Caco-2 (cell line): ENCODE measurements at regions of chr5 and their contacts with region 1.

Region 1: GRCh38 chr5:151447174-151448037 is at the start of gene SLC36A1:
- DNase-seq: peak; percentile 94
- H3K4me3 ChIP-seq: peak within 1 kb of the TSS; percentile 81
- H3K4me3 Mint-ChIP-seq: peak within 1 kb of the TSS; percentile 94
- H3K27ac Mint-ChIP-seq: peak within 1 kb of the TSS; percentile 88
- H3K4me1 ChIP-seq: peaks cover 8% of the 10 kb centered on the region; the same call in 1 of the 2 replicates
- H3K4me1 Mint-ChIP-seq: peaks cover 27% of the 10 kb centered on the region
- H3K27me3 ChIP-seq: no peaks in the 10 kb centered on the region
- H3K27me3 Mint-ChIP-seq: no peaks in the 10 kb centered on the region
- CTCF ChIP-seq: peak; percentile 87 to 93
- total RNA-seq, gene SLC36A1: 17.5 and 18.2 TPM in 2 replicates

Region 2: DNA sequence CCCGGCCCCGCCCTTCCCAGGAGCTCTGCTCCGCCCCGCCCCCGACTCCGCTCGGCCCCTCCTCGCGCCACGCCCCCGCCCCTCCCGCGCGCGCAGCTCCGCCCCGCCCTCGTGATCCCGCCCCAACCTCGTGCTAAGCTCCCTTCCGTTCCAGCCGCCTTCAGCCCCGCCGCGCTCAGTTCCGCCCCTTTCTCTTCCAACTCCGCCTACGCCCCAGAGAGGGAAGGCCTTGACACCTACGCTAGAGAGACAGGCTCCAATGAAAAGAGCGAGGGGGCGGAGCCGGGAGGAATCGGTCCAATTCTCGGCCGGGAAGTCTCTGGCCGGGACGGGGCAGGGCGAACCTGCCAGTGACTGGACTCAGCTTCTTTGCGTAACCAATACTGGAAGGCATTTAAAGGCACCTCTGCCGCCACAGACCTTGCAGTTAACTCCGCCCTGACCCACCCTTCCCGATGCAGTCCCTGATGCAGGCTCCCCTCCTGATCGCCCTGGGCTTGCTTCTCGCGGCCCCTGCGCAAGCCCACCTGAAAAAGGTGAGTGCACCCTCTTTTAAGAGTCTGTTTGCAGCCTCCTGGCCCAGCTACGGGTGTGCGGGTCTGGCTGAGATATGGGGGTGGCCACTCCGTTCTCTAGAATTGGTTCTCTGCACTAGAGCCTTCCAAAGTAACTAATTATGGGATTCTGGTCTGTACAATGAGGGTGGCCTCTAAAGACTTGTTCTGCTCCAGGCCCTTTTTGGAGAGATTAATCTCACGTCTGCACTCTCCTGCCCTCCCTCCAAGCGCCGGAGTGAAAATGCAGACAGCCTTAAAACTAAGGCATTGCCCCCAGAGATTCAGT is 194.4 kb before region 1 on chr5 and contains the start of gene GM2A:
- CTCF ChIA-PET with region 1: interaction called, 10 read pairs
- POLR2A ChIA-PET with region 1: interaction called, 4 read pairs
- intact Hi-C with region 1: no loop called
- DNase-seq: peak; percentile 99 to 100
- H3K4me3 ChIP-seq: peak within 1 kb of the TSS; percentile 76
- H3K4me3 Mint-ChIP-seq: peak within 1 kb of the TSS; percentile 76
- H3K27ac Mint-ChIP-seq: peak within 1 kb of the TSS; percentile 50
- H3K4me1 ChIP-seq: peaks cover 16% of the 10 kb centered on the region
- H3K4me1 Mint-ChIP-seq: peaks cover 23% of the 10 kb centered on the region
- H3K27me3 ChIP-seq: no peaks in the 10 kb centered on the region
- H3K27me3 Mint-ChIP-seq: no peaks in the 10 kb centered on the region
- CTCF ChIP-seq: no peak
- total RNA-seq, gene GM2A: 27.6 and 28.0 TPM in 2 replicates

Region 3: GRCh38 chr5:151357801-151358200 is 89.6 kb before region 1 on chr5:
- CTCF ChIA-PET with region 1: no interaction called
- POLR2A ChIA-PET with region 1: no interaction called
- intact Hi-C with region 1: no loop called
- DNase-seq: no peak
- H3K4me3 ChIP-seq: no peak overlapping the region
- H3K4me3 Mint-ChIP-seq: no peak overlapping the region
- H3K27ac Mint-ChIP-seq: no peak overlapping the region
- H3K4me1 ChIP-seq: no peaks in the 10 kb centered on the region
- H3K4me1 Mint-ChIP-seq: no peaks in the 10 kb centered on the region
- H3K27me3 ChIP-seq: no peaks in the 10 kb centered on the region
- H3K27me3 Mint-ChIP-seq: peaks cover 2% of the 10 kb centered on the region
- CTCF ChIP-seq: no peak

Region 4: DNA sequence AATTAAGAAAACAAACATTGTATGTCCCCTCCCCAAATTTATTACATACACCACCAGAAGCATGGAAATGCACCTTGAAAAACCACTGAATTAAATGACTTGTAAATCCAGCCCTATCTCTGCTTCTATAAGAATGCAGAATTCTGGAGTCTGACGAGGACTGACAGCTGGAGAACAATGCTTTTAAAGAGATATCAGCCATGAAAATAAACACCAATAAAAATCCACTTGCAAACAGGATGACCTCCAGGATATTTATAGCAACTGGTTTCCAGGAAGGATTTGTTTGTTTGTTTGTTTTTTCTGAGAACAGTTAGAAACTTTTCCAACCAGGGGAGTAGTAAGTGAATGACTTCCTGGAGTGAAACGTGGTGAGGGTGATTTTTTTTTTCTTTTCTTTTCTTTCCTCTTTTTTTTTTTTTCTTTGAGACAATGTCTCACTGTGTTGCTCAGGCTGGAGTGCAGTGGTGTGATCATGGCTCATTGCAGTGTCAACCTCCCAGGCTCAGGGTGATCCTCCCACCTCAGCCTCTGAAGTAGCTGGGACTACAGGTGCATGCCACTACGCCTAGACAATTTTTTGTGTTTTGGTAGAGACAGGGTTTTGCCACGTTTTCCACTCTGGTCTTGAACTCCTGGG is 38.7 kb before region 1 on chr5:
- CTCF ChIA-PET with region 1: no interaction called
- POLR2A ChIA-PET with region 1: no interaction called
- intact Hi-C with region 1: no loop called
- DNase-seq: no peak
- H3K4me3 ChIP-seq: no peak overlapping the region
- H3K4me3 Mint-ChIP-seq: no peak overlapping the region
- H3K27ac Mint-ChIP-seq: no peak overlapping the region
- H3K4me1 ChIP-seq: peaks cover 9% of the 10 kb centered on the region
- H3K4me1 Mint-ChIP-seq: peaks cover 10% of the 10 kb centered on the region
- H3K27me3 ChIP-seq: no peaks in the 10 kb centered on the region
- H3K27me3 Mint-ChIP-seq: no peaks in the 10 kb centered on the region
- CTCF ChIP-seq: no peak

Region 5: DNA sequence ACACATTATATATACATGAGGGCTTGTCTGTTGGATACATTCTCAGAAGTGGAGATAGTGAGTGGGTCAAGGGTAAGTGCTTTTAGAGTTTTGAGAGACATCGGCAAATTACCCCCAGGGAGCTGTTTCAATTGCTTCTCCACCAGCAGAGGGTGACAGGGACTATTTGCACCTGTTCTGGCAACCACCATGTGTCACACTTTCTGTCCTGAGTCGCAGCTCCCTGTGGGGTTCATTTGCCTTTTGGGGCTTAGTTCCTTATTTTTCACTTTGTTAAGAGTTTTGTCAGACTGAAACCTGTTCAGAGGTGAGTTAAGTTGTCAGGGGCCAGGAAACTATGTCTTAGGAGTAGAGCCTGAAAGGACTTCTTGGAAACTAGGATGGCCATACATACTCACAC is 20.1 kb before region 1 on chr5:
- CTCF ChIA-PET with region 1: interaction called, 13 read pairs
- POLR2A ChIA-PET with region 1: no interaction called
- intact Hi-C with region 1: no loop called
- DNase-seq: no peak
- H3K4me3 ChIP-seq: no peak overlapping the region
- H3K4me3 Mint-ChIP-seq: no peak overlapping the region
- H3K27ac Mint-ChIP-seq: peak overlapping the region; percentile 34
- H3K4me1 ChIP-seq: peaks cover 21% of the 10 kb centered on the region
- H3K4me1 Mint-ChIP-seq: peaks cover 20% of the 10 kb centered on the region
- H3K27me3 ChIP-seq: no peaks in the 10 kb centered on the region
- H3K27me3 Mint-ChIP-seq: no peaks in the 10 kb centered on the region
- CTCF ChIP-seq: peak; percentile 27 to 41

Region 6: GRCh38 chr5:151499501-151500035 is 52.2 kb after region 1 on chr5:
- CTCF ChIA-PET with region 1: interaction called, 6 read pairs
- POLR2A ChIA-PET with region 1: no interaction called
- intact Hi-C with region 1: loop called (anchors 1 kb)
- DNase-seq: no peak
- H3K4me3 ChIP-seq: no peak overlapping the region
- H3K4me3 Mint-ChIP-seq: no peak overlapping the region
- H3K27ac Mint-ChIP-seq: no peak overlapping the region
- H3K4me1 ChIP-seq: no peaks in the 10 kb centered on the region
- H3K4me1 Mint-ChIP-seq: no peaks in the 10 kb centered on the region
- H3K27me3 ChIP-seq: no peaks in the 10 kb centered on the region
- H3K27me3 Mint-ChIP-seq: no peaks in the 10 kb centered on the region
- CTCF ChIP-seq: no peak

Region 7: DNA sequence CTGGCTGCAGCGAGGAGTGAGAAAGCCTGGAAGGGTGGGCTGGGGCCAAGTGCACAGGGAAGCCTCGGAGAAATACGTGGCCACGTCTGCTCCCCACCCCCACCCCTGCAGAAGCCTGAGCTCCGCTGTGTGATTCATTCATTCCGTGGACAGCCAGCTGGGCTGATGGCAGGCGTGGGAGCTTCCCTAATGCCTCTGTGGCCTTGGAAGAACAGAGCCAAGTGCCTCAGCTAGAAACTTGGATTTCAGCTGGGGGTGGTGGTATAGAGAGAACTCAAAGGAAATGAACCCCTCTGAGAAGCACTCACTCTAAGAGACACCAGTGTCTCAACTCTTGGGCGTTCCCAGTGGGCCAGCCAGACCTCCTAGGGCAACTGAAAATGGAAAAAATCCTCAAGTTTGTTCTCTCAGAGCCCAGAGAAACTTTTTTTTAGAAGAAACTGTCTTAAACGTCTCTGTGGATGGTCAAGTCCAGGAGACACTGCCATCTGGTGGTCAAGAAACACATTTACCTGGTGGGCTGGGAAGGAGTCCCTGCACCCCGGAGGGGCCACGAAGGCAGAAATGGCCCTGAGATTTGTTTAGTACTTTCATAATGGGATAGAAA is 293.0 kb after region 1 on chr5:
- CTCF ChIA-PET with region 1: no interaction called
- POLR2A ChIA-PET with region 1: no interaction called
- intact Hi-C with region 1: loop called (anchors 1 kb)
- DNase-seq: peak; percentile 62 to 70
- H3K4me3 ChIP-seq: no peak overlapping the region
- H3K4me3 Mint-ChIP-seq: no peak overlapping the region
- H3K27ac Mint-ChIP-seq: peak overlapping the region; percentile 51
- H3K4me1 ChIP-seq: peaks cover 15% of the 10 kb centered on the region
- H3K4me1 Mint-ChIP-seq: peaks cover 16% of the 10 kb centered on the region
- H3K27me3 ChIP-seq: no peaks in the 10 kb centered on the region
- H3K27me3 Mint-ChIP-seq: no peaks in the 10 kb centered on the region
- CTCF ChIP-seq: peak; percentile 82 to 94